ENCODE measurements at regions of chr15 and their contacts with region 1.

Region 1: DNA sequence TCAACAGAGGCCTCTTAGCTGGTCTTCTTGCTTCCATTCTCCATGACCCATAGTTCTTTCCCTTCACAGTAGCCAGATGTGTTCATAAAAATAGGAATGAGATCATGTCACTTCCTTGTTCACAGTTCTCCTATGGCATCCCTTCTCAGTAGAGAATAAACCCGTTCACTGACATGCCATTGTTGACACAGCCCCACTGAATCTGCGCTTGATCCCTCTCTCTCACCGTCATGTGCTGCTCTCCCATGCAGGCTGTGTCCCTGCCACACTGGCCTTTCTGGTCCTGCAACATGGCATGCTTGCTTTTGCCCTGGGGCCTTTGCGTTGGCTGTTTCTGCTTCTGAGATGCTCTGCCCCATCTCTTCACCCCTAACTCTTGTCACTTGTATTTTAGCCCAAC is 42.1 kb downstream of the STARD5 start:
- DNase-seq: no peak
- ATAC-seq: no peak
- H3K4me3 ChIP-seq: no peak overlapping the region
- H3K27ac ChIP-seq: no peak overlapping the region
- H3K4me1 ChIP-seq: no peaks in the 10 kb centered on the region
- H3K27me3 ChIP-seq: no peaks in the 10 kb centered on the region
- CTCF ChIP-seq: no peak
- POLR2A ChIP-seq: no peak
- RAD21 ChIP-seq: no peak

Region 2: DNA sequence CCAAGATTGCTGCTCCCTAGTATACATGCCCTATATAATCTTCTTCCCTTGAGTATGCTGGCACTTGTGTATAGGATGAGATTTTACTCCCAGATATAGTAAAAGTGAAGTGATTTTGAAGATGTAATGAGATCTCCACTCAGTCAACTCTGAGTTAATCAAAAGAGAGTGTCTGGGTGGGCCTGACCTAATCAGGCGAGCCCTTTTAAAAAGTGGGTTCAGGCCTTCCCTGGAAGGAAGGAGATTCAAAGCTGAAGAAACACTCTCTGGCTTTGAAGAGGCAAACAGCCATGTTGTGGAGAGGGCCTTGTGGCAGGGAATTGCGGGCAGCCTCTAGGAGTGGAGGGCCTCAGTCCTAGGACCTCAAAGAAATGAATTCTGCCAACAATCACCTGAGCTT is 47.6 kb after region 1 on chr15:
- CTCF ChIA-PET with region 1: no interaction called
- POLR2A ChIA-PET with region 1: no interaction called
- RAD21 ChIA-PET with region 1: no interaction called
- intact Hi-C with region 1: loop called (anchors 2 kb)
- DNase-seq: no peak
- ATAC-seq: no peak
- H3K4me3 ChIP-seq: no peak overlapping the region
- H3K27ac ChIP-seq: no peak overlapping the region
- H3K4me1 ChIP-seq: peaks cover 2 to 6% of the 10 kb centered on the region in 2 experiments; a peak in 3 of 4 replicates
- H3K27me3 ChIP-seq: no peaks in the 10 kb centered on the region
- CTCF ChIP-seq: no peak
- POLR2A ChIP-seq: no peak
- RAD21 ChIP-seq: no peak